ENCODE measurements at regions of chr9 and their contacts with region 1.

Region 1: DNA sequence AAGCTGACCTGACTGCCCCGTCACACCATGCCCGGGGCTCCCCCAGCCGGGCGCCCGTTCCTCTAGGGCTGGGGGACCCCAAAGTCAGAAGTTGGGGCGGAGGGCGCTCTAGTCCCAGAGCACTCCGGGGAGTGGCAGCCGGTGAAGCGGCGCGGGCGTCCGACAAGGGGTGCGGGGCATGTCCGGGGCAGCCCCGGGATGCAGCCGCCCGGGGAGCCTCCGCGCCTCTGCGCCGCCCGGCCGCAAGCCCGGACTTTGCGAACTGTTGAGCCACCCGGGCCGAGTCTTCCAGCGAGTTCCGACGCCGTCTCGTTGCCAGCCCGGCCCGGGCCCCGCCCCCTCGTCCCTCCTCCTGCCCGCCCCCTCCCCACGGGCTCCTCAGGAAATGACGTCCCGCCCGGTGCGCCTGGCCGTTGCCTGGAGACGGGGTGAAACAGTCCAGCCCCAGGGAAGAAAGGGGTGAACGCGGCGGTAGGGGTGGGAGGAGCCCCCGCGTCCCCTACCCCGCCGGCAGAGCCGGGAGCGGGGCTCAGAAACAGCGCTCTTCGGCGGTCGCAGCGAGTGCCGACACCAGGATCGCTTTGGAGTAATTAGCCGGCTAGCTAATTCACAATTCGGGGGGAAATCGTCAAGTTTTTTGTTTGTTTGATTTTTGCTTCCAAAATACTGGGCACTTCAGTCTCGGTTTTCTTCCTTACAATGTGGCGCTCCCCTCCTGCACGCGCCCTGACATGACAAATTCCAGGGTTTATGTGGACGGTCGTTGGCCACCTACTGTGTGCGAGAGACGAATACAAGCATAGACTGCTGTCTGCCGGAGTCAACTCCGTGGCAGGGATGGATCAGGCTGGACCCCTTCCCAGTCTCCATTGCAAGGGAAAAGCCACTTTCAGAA is at the start of gene WHRN:
- DNase-seq: peak; percentile 95 to 96 (median 96)
- H3K4me3 ChIP-seq: peak within 1 kb of the TSS; percentile 43 to 81 (median 57)
- H3K27ac ChIP-seq: peak within 1 kb of the TSS in 1 of 2 experiments; percentile 22
- H3K4me1 ChIP-seq: peaks cover 0 to 26% (median 19%) of the 10 kb centered on the region in 4 experiments
- H3K27me3 ChIP-seq: peaks cover 0 to 39% (median 24%) of the 10 kb centered on the region in 5 experiments

Region 2: DNA sequence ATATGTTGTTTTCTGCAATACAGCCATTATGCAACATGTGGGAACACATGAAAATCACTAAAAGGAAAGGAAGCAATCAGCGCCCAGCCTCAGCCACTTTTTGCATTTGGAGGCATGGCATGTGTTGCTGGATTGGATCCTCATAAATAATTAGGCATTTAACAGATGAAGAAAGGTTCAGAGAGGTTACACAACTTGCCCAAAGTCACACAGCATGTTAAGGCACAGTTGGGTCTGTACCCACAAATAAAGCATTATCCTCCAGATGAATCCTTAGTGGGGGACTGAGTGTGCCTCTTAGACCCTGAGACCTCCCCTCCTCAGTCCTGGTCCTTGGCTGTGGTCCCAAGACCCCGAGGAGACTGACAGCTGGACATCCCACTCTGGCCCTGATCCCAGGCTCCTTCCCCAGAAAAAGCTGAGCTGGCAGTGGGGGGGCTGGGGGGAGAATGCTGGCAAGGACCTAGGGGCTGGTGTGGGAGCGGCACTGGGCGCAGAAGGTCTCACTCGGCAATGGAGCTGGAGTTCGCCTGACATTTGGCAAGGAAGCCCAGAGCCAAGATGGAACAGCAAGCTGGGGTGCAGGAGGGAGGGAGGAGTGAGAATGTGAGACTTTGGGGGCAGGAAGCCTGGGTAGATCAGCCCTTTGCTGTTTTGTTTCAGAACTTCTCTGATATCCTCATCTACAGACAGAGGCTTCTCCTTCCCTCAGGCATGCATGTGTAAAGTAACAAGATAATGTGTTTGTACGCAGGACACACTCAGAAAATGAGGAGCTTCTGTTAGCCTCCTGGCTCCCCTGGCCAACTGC is 110.7 kb before region 1 on chr9:
- CTCF ChIA-PET with region 1: no interaction called
- POLR2A ChIA-PET with region 1: no interaction called
- DNase-seq: no peak
- H3K4me3 ChIP-seq: peak overlapping the region in 1 of 7 experiments; percentile 48
- H3K27ac ChIP-seq: peak overlapping the region in 1 of 2 experiments; percentile 17
- H3K4me1 ChIP-seq: peaks cover 7 to 49% (median 37%) of the 10 kb centered on the region in 4 experiments
- H3K27me3 ChIP-seq: no peaks in the 10 kb centered on the region

Region 3: DNA sequence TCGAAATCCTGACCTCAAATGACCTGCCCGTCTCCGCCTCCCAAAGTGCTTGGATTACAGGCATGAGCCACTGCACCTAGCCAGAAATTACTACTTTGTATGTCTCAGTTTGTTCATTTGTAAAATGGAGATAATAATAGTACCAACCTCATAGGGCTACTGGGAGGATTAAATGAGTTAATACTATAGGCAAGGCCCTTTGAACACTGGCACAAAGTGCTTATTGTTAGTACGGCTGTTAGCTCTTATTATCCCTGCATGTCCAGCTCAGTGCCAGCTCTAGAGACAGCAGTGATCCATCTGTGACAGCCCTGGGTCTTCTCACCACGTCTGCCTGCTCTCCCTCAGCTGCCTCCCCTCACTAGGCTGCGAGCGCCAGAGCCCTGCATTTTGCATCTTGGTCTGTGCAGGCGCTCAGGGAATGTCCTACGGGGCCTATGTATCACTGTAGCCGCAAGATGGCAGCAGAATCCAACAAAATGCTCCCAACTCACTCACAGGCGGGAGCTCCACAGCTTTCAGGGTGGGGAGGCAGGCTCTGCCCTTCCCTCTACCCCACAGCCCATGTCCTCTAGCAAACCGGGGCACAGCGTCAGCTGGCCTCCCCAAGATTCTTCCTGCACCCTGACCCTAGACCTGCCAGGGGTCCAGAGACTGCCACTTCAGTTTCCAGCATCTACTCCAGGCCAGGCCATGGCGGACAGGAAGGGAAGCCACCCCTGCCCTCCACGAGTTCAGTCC is 100.0 kb before region 1 on chr9:
- CTCF ChIA-PET with region 1: interaction called, 62 read pairs
- POLR2A ChIA-PET with region 1: no interaction called
- DNase-seq: peak; percentile 79 to 90 (median 86)
- H3K4me3 ChIP-seq: no peak overlapping the region
- H3K27ac ChIP-seq: no peak overlapping the region
- H3K4me1 ChIP-seq: peaks cover 0 to 8% (median 7%) of the 10 kb centered on the region in 4 experiments
- H3K27me3 ChIP-seq: no peaks in the 10 kb centered on the region

Region 4: GRCh38 chr9:114434878-114435311 is 70.5 kb before region 1 on chr9:
- CTCF ChIA-PET with region 1: interaction called, 66 read pairs
- POLR2A ChIA-PET with region 1: no interaction called
- DNase-seq: peak; percentile 61 to 69 (median 62)
- H3K4me3 ChIP-seq: no peak overlapping the region
- H3K27ac ChIP-seq: no peak overlapping the region
- H3K4me1 ChIP-seq: peaks cover 0 to 11% (median 3%) of the 10 kb centered on the region in 4 experiments
- H3K27me3 ChIP-seq: no peaks in the 10 kb centered on the region

Region 5: GRCh38 chr9:114442022-114442421 is 63.4 kb before region 1 on chr9:
- CTCF ChIA-PET with region 1: interaction called, 66 read pairs
- POLR2A ChIA-PET with region 1: no interaction called
- DNase-seq: no peak
- H3K4me3 ChIP-seq: no peak overlapping the region
- H3K27ac ChIP-seq: no peak overlapping the region
- H3K4me1 ChIP-seq: peaks cover 0 to 2% (median 0%) of the 10 kb centered on the region in 4 experiments
- H3K27me3 ChIP-seq: no peaks in the 10 kb centered on the region

Region 6: DNA sequence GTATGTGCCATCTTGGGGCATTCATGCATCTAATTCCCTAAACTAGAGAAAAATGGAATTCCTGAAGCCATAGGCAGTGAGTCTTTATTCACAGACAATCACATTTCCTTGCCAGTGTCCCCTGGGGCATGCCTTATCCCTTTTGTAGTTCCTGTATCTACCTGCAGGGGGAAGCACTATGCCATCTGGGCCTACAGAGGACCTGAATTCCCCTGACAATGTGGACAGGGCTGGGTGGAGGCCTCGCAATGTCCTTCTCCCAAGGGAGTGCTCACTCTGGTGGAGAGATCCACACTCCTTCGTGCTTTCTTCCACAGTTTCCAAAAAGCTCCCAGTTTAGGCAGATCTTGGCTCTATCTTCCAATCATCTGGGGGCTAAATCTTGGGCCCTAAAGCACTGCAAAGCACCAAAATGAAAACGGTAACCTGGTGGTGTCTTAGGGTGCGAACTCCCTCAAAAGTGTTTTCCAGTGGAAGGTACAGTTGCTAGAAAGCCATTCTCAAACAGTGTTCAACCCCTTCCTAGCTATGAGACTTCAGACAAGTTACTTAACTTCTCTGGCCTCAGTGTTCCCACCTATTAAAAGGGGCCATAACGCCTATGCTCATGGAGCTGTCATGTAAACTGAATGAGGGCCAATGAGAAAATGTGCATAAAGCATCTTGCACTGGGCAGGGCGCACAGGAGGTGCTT is 17.7 kb before region 1 on chr9:
- CTCF ChIA-PET with region 1: interaction called, 80 read pairs
- POLR2A ChIA-PET with region 1: interaction called, 4 read pairs
- DNase-seq: peak; percentile 60 to 80 (median 72)
- H3K4me3 ChIP-seq: no peak overlapping the region
- H3K27ac ChIP-seq: no peak overlapping the region
- H3K4me1 ChIP-seq: peaks cover 0 to 6% (median 1%) of the 10 kb centered on the region in 4 experiments
- H3K27me3 ChIP-seq: no peaks in the 10 kb centered on the region

Region 7: GRCh38 chr9:114493521-114494184 is 11.8 kb before region 1 on chr9:
- CTCF ChIA-PET with region 1: interaction called, 80 read pairs
- POLR2A ChIA-PET with region 1: interaction called, 3 read pairs
- DNase-seq: no peak
- H3K4me3 ChIP-seq: no peak overlapping the region
- H3K27ac ChIP-seq: no peak overlapping the region
- H3K4me1 ChIP-seq: peaks cover 0 to 5% (median 0%) of the 10 kb centered on the region in 4 experiments
- H3K27me3 ChIP-seq: peaks cover 0 to 21% (median 4%) of the 10 kb centered on the region in 5 experiments

Region 8: DNA sequence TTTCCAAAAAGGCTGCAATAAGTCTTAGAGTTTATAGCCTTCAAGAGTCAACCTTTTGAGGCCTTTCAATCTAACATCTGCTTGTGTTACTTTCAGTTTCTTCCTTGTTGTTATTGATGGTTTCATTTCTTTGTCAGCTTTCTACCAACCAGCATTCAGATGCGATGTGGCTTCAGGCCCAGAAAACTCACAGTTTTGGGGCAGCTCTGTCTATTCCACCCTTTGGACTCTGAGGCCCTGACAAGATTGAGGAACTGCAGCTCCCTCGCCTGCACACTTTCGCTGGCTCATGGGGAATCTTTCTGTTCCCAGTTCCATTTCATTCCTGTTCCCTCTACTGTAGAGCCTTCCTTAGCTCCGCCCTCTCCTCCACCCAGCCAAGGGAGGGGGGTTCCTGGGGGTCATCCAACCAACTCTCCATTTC is 13.2 kb after region 1 on chr9:
- CTCF ChIA-PET with region 1: interaction called, 47 read pairs
- POLR2A ChIA-PET with region 1: no interaction called
- DNase-seq: peak in 1 of 3 donors; percentile 35
- H3K4me3 ChIP-seq: no peak overlapping the region
- H3K27ac ChIP-seq: no peak overlapping the region
- H3K4me1 ChIP-seq: peaks cover under 1 to 5% (median 4%) of the 10 kb centered on the region in 4 experiments
- H3K27me3 ChIP-seq: peaks cover 0 to 15% (median 0%) of the 10 kb centered on the region in 5 experiments

Region 9: DNA sequence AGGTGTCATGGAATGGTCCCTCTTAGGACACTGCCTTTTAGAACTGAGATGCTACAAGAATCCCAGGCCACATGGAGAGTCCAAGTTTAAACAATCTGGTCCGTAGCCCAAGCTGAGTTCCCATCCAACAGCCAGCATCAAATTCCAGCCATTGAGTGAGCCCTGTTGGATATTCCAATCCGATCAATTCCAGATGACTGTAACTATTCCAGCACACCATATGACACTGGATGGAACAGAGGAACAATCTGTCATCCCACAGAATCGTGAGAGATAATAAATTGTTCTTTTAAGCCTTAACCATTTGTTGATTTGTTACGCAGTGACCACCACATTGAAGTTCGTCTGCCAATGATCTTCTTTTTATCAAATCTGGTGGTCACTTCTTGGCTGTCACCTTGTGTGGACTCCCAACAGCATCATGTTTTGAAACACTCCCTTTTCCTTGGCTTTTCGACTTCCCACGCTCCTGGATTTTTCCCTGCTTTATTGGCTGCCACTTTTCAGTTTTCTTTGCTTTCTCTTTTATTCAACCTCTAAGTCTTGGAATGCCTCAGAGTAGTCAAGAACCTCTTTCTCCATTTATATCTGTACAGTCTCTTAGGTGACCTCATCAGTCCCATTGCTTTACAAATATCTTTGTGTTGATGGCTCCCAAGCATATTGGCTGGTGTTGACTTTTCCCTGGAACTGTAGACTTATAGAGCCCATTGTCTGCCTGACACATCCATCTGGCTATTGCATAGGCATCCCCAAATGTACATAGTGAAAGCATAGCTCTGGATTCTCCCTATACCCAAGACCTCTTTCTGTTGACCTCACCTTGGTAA is 254.3 kb after region 1 on chr9:
- CTCF ChIA-PET with region 1: no interaction called
- POLR2A ChIA-PET with region 1: no interaction called
- DNase-seq: no peak
- H3K4me3 ChIP-seq: no peak overlapping the region
- H3K27ac ChIP-seq: no peak overlapping the region
- H3K4me1 ChIP-seq: peaks cover 0 to 14% (median 0%) of the 10 kb centered on the region in 4 experiments
- H3K27me3 ChIP-seq: no peaks in the 10 kb centered on the region